B cell (primary cell): ENCODE measurements at regions of chr1 and their contacts with region 1.

Region 1: DNA sequence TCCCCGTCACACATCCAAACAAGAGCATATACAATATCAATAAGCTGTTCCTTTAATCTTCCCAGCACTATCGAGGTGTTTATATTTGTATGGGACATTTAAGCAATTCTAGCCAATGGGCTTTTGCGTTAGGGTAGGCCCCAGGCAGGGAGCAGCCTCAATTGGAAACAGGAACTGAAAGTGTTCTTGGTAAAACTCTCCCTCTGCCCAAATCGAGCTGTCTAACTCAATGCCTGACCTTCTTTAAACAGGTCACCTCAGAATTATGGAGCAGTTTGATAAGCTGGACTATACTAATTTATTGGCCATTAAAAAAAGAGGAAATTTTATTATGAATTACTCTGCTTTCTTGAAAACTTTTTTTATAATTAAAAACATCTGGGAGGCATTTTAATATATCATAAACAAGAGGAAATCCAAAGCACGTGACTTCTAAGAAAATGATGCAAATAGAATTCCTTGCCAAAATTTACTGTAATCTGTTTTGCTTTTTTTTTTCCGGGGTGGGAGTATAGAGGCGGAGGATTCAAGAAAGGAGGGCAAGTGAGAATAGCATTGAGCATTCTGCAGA is 498.1 kb downstream of the LMO4 start:
- DNase-seq: peak; percentile 82
- ATAC-seq: peak; percentile 96
- H3K4me3 ChIP-seq: peak overlapping the region in 2 of 5 experiments; percentile 8 to 43
- H3K4me3 Mint-ChIP-seq: peak overlapping the region; percentile 58
- H3K27ac ChIP-seq: no peak overlapping the region
- H3K27ac Mint-ChIP-seq: peak overlapping the region; percentile 64
- H3K4me1 ChIP-seq: peaks cover 17 to 27% of the 10 kb centered on the region in 2 donors
- H3K4me1 Mint-ChIP-seq: peaks cover 37% of the 10 kb centered on the region
- H3K27me3 ChIP-seq: no peaks in the 10 kb centered on the region
- H3K27me3 Mint-ChIP-seq: no peaks in the 10 kb centered on the region
- CTCF ChIP-seq: no peak

Region 2: GRCh38 chr1:87669674-87670073 is 157.1 kb before region 1 on chr1:
- CTCF ChIA-PET with region 1: no interaction called
- POLR2A ChIA-PET with region 1: no interaction called
- intact Hi-C with region 1: no loop called
- DNase-seq: no peak
- ATAC-seq: no peak
- H3K4me3 ChIP-seq: no peak overlapping the region
- H3K4me3 Mint-ChIP-seq: no peak overlapping the region
- H3K27ac ChIP-seq: no peak overlapping the region
- H3K27ac Mint-ChIP-seq: no peak overlapping the region
- H3K4me1 ChIP-seq: no peaks in the 10 kb centered on the region
- H3K4me1 Mint-ChIP-seq: no peaks in the 10 kb centered on the region
- H3K27me3 ChIP-seq: no peaks in the 10 kb centered on the region
- H3K27me3 Mint-ChIP-seq: no peaks in the 10 kb centered on the region
- CTCF ChIP-seq: no peak

Region 3: DNA sequence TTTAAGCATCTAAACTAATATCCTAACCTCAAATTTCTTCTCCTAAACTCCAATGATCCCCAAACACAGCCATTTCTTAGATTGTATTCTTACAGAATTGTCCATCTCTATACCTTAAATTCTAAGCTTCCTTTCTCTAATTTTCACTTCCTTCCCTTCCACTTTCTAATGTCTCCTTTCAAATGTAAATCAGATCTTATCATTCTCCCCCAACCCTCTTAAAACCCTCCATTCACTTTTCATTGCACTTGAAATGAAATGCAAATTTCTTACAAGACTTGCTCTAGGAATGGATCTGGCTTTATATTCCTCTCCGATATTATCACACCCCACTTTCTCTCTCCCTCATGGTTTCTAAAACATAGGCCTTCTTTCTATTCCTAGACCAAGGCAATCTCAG is 36.6 kb after region 1 on chr1:
- CTCF ChIA-PET with region 1: no interaction called
- POLR2A ChIA-PET with region 1: no interaction called
- intact Hi-C with region 1: loop called (anchors 2 kb)
- DNase-seq: no peak
- ATAC-seq: no peak
- H3K4me3 ChIP-seq: no peak overlapping the region
- H3K4me3 Mint-ChIP-seq: no peak overlapping the region
- H3K27ac ChIP-seq: no peak overlapping the region
- H3K27ac Mint-ChIP-seq: no peak overlapping the region
- H3K4me1 ChIP-seq: peaks cover 16 to 22% of the 10 kb centered on the region in 2 donors
- H3K4me1 Mint-ChIP-seq: peaks cover 19% of the 10 kb centered on the region
- H3K27me3 ChIP-seq: no peaks in the 10 kb centered on the region
- H3K27me3 Mint-ChIP-seq: no peaks in the 10 kb centered on the region
- CTCF ChIP-seq: no peak